CD8-positive, alpha-beta memory T cell (primary cell): ENCODE measurements at regions of chr14 and their contacts with region 1.

Region 1: GRCh38 chr14:34714320-34715126 is at the start of gene CFL2:
- DNase-seq: peak; percentile 66 to 81 (median 74)
- H3K4me3 ChIP-seq: peak within 1 kb of the TSS; percentile 58
- H3K4me3 Mint-ChIP-seq: peak within 1 kb of the TSS; percentile 92 to 97 (median 94)
- H3K27ac ChIP-seq: peak within 1 kb of the TSS; percentile 55
- H3K27ac Mint-ChIP-seq: peak within 1 kb of the TSS; percentile 89 to 97 (median 94)
- H3K4me1 ChIP-seq: peaks cover 6% of the 10 kb centered on the region
- H3K4me1 Mint-ChIP-seq: peaks cover 25 to 35% (median 30%) of the 10 kb centered on the region in 3 donors
- H3K27me3 ChIP-seq: no peaks in the 10 kb centered on the region
- H3K27me3 Mint-ChIP-seq: no peaks in the 10 kb centered on the region
- total RNA-seq, gene CFL2: 8.4 to 10.0 TPM

Region 2: DNA sequence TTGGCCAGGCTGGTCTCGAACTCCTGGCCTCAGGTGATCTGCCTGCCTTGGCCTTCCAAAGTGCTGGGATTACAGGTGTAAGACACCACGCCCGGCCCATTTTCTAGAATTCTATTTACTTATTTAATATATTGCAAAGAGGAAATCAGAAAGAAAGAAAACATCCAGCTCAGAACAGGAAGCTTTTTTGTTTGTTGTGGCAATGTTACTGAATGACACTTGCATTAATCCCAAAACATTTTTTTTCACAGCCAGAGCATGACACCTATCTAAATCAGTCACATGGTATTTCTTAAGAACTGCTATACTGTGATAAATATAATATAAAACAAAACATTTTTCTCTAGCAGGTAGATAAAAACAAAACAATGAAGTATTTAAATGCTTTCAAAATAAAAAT is 12.7 kb before region 1 on chr14:
- CTCF ChIA-PET with region 1: no interaction called
- POLR2A ChIA-PET with region 1: interaction called, 11 read pairs
- DNase-seq: no peak
- H3K4me3 ChIP-seq: no peak overlapping the region
- H3K4me3 Mint-ChIP-seq: no peak overlapping the region
- H3K27ac ChIP-seq: no peak overlapping the region
- H3K27ac Mint-ChIP-seq: no peak overlapping the region
- H3K4me1 ChIP-seq: no peaks in the 10 kb centered on the region
- H3K4me1 Mint-ChIP-seq: no peaks in the 10 kb centered on the region
- H3K27me3 ChIP-seq: no peaks in the 10 kb centered on the region
- H3K27me3 Mint-ChIP-seq: no peaks in the 10 kb centered on the region

Region 3: DNA sequence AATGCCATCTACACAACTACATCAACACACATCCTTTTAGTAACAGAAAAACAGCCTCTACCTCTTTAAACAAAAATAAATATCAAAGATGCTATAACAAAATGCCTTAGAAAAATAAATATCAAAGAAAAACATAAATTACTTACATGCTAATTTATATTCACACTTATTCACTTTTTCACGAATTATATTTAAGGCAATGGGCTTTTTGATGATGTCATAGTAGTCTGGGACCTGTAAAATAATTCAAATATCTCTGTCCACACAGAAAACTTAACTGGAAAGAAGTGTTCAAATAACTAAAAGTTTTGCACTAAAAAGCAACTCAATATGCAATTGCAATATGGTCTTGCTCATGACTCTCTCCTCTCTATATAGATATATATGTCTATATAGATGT is 40.2 kb after region 1 on chr14:
- CTCF ChIA-PET with region 1: no interaction called
- POLR2A ChIA-PET with region 1: no interaction called
- DNase-seq: no peak
- H3K4me3 ChIP-seq: no peak overlapping the region
- H3K4me3 Mint-ChIP-seq: no peak overlapping the region
- H3K27ac ChIP-seq: no peak overlapping the region
- H3K27ac Mint-ChIP-seq: peak overlapping the region in 3 of 8 donors; percentile 1 to 60 (median 3)
- H3K4me1 ChIP-seq: no peaks in the 10 kb centered on the region
- H3K4me1 Mint-ChIP-seq: peaks cover 0 to 5% (median 0%) of the 10 kb centered on the region in 3 donors
- H3K27me3 ChIP-seq: no peaks in the 10 kb centered on the region
- H3K27me3 Mint-ChIP-seq: no peaks in the 10 kb centered on the region

Region 4: GRCh38 chr14:34770901-34771300 is 56.4 kb after region 1 on chr14:
- CTCF ChIA-PET with region 1: no interaction called
- POLR2A ChIA-PET with region 1: no interaction called
- DNase-seq: no peak
- H3K4me3 ChIP-seq: no peak overlapping the region
- H3K4me3 Mint-ChIP-seq: no peak overlapping the region
- H3K27ac ChIP-seq: no peak overlapping the region
- H3K27ac Mint-ChIP-seq: no peak overlapping the region
- H3K4me1 ChIP-seq: no peaks in the 10 kb centered on the region
- H3K4me1 Mint-ChIP-seq: peaks cover 6 to 20% (median 6%) of the 10 kb centered on the region in 3 donors
- H3K27me3 ChIP-seq: no peaks in the 10 kb centered on the region
- H3K27me3 Mint-ChIP-seq: no peaks in the 10 kb centered on the region

Region 5: DNA sequence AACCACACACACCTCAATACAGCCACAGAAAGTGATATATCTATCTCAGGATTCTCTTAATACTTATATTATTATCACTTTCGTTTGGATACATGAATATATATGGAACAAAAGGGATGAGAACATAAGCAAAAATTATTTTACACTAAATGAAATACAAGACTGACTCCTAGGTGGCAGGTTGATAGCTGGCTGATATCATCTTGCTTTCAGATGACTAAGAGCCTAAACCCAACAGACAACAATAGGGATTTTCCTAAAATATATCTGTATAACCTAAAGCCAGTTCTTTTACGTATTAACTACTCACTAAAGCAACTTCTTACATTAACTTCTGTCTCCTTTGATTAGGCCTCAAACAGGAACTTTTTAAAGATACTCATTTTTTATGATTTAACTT is 95.5 kb after region 1 on chr14:
- CTCF ChIA-PET with region 1: no interaction called
- POLR2A ChIA-PET with region 1: no interaction called
- DNase-seq: no peak
- H3K4me3 ChIP-seq: no peak overlapping the region
- H3K4me3 Mint-ChIP-seq: no peak overlapping the region
- H3K27ac ChIP-seq: no peak overlapping the region
- H3K27ac Mint-ChIP-seq: peak overlapping the region in 3 of 8 donors; percentile 0 to 2 (median 1)
- H3K4me1 ChIP-seq: no peaks in the 10 kb centered on the region
- H3K4me1 Mint-ChIP-seq: peaks cover 12 to 24% (median 18%) of the 10 kb centered on the region in 3 donors
- H3K27me3 ChIP-seq: no peaks in the 10 kb centered on the region
- H3K27me3 Mint-ChIP-seq: no peaks in the 10 kb centered on the region